ENCODE measurements at regions of chr1 and their contacts with region 1.

Region 1: GRCh38 chr1:104720741-104721140 is 971.0 kb downstream of the AMY1C start:
- DNase-seq: no peak
- ATAC-seq: no peak
- H3K4me3 ChIP-seq: no peak overlapping the region
- H3K27ac ChIP-seq: no peak overlapping the region
- H3K4me1 ChIP-seq: no peaks in the 10 kb centered on the region
- H3K27me3 ChIP-seq: no peaks in the 10 kb centered on the region
- CTCF ChIP-seq: no peak

Region 2: GRCh38 chr1:104621221-104621620 is 99.5 kb before region 1 on chr1:
- CTCF ChIA-PET with region 1: no interaction called
- POLR2A ChIA-PET with region 1: no interaction called
- in situ Hi-C with region 1: no loop called
- intact Hi-C with region 1: no loop called
- DNase-seq: no peak
- ATAC-seq: no peak
- H3K4me3 ChIP-seq: no peak overlapping the region
- H3K27ac ChIP-seq: no peak overlapping the region
- H3K4me1 ChIP-seq: no peaks in the 10 kb centered on the region
- H3K27me3 ChIP-seq: no peaks in the 10 kb centered on the region
- CTCF ChIP-seq: no peak

Region 3: GRCh38 chr1:105626276-105626987 is 905.7 kb after region 1 on chr1:
- CTCF ChIA-PET with region 1: no interaction called
- POLR2A ChIA-PET with region 1: interaction called, 13 read pairs
- in situ Hi-C with region 1: no loop called
- intact Hi-C with region 1: no loop called
- DNase-seq: no peak
- ATAC-seq: no peak
- H3K4me3 ChIP-seq: no peak overlapping the region
- H3K27ac ChIP-seq: no peak overlapping the region
- H3K4me1 ChIP-seq: no peaks in the 10 kb centered on the region
- H3K27me3 ChIP-seq: no peaks in the 10 kb centered on the region
- CTCF ChIP-seq: no peak

Measured in Panc1 (cell line).